ENCODE measurements at regions of chr19 and their contacts with region 1.

Region 1: GRCh38 chr19:48170038-48170812 is at the starts of genes LIG1 and ZSWIM9:
- DNase-seq: peak; percentile 90 to 97 (median 93)
- H3K4me3 ChIP-seq: peak within 1 kb of the TSS; percentile 65 to 97
- H3K4me3 Mint-ChIP-seq: peak within 1 kb of the TSS; percentile 96 to 99 (median 97)
- H3K27ac ChIP-seq: peak within 1 kb of the TSS; percentile 86
- H3K27ac Mint-ChIP-seq: peak within 1 kb of the TSS; percentile 93 to 99 (median 98)
- H3K4me1 ChIP-seq: peaks cover 24% of the 10 kb centered on the region
- H3K4me1 Mint-ChIP-seq: peaks cover 18 to 32% (median 23%) of the 10 kb centered on the region in 4 donors
- H3K27me3 ChIP-seq: no peaks in the 10 kb centered on the region
- H3K27me3 Mint-ChIP-seq: no peaks in the 10 kb centered on the region
- total RNA-seq, gene LIG1: 118 to 124 TPM
- total RNA-seq, gene ZSWIM9: 10.5 to 11.8 TPM

Region 2: DNA sequence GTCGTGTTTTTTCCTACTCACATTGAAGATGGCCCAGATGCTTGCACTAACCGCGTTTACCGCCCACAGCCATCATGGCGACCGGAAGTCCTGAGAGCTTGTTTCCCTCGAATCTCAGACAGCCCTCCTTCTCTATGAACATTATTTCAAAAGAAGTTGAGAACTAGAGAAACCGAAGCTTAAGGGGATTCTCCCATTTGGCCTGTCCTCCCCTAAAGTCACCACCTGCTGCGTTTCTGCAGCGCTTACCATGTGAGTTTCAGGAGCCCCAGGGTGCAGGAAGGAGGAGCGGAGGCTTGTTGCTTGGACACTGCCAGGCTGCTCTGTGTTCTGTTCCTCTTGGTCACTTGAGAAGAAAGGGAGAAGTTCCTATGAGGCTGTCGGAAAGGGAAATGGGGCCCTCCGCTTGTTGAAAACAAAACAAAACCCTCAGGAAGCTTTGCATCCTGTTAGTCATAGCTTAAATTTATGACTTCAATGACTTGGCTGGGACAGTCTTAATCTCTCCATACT is 79.3 kb after region 1 on chr19:
- CTCF ChIA-PET with region 1: no interaction called
- POLR2A ChIA-PET with region 1: interaction called, 12 read pairs
- intact Hi-C with region 1: no loop called
- DNase-seq: peak; percentile 74 to 88 (median 76)
- H3K4me3 ChIP-seq: peak overlapping the region; percentile 48 to 87
- H3K4me3 Mint-ChIP-seq: peak overlapping the region; percentile 91 to 97 (median 94)
- H3K27ac ChIP-seq: peak overlapping the region; percentile 93
- H3K27ac Mint-ChIP-seq: peak overlapping the region; percentile 98 to 99 (median 98)
- H3K4me1 ChIP-seq: peaks cover 89% of the 10 kb centered on the region
- H3K4me1 Mint-ChIP-seq: peaks cover 56 to 87% (median 69%) of the 10 kb centered on the region in 4 donors
- H3K27me3 ChIP-seq: no peaks in the 10 kb centered on the region
- H3K27me3 Mint-ChIP-seq: no peaks in the 10 kb centered on the region